Left lung (tissue), 14 donors: ENCODE measurements at regions of chr6 and their contacts with region 1.

Region 1: GRCh38 chr6:13194852-13195251 is 133.5 kb downstream of the TBC1D7 start:
- DNase-seq: peak; percentile 12 to 73 (median 62)
- ATAC-seq: peak; percentile 52
- H3K4me3 ChIP-seq: no peak overlapping the region
- H3K27ac ChIP-seq: no peak overlapping the region
- H3K4me1 ChIP-seq: no peaks in the 10 kb centered on the region
- H3K27me3 ChIP-seq: no peaks in the 10 kb centered on the region
- CTCF ChIP-seq: peak; percentile 28

Region 2: GRCh38 chr6:13328076-13328874 is 133.4 kb after region 1 on chr6 and contains the start of gene TBC1D7:
- intact Hi-C with region 1: loop called in 1 of 2 experiments (anchors 10 kb)
- DNase-seq: peak; percentile 91 to 98 (median 95)
- ATAC-seq: peak; percentile 96
- H3K4me3 ChIP-seq: peak within 1 kb of the TSS; percentile 78 to 85
- H3K27ac ChIP-seq: peak within 1 kb of the TSS; percentile 93 to 97
- H3K4me1 ChIP-seq: peaks cover 2 to 22% of the 10 kb centered on the region in 2 donors
- H3K27me3 ChIP-seq: no peaks in the 10 kb centered on the region
- CTCF ChIP-seq: no peak
- polyA plus RNA-seq, gene TBC1D7: 27.4 to 38.8 (median 34.9) TPM

Region 3: DNA sequence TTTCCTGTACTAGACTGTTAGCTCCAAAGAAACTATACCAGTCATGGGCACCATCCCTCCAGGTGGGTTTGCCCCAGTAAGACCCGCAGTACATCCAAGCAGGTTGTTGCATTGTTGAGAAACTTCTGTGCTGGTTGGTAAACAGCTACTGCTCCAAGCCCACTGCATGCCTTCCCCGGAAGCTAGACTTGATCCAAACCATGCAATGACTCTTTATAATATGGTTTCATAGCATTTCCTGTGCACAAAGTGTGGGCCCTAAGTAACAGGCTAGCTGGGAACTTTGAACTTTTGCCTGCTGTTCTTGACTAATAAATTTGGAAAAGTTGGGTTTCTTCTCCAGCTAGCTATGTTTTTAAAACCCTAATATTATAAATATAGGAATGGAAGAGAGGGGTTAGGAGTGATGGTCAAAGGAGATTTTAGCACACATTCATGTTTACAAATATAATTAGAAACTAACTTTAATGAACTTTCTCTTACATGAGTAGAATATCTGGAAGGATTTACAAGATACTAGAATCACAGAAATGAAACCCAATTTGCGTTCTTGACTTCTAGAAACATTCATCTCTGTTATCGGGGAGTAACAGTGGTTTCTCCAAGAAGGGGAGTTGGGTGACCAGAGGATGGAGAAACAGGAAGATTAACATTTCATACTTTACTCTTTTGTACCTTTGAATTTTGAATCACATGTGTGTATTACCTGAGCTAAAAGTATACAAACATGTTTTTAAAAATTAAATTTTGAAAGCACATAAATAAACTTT is 240.8 kb after region 1 on chr6:
- intact Hi-C with region 1: no loop called
- DNase-seq: no peak
- ATAC-seq: no peak
- H3K4me3 ChIP-seq: no peak overlapping the region
- H3K27ac ChIP-seq: no peak overlapping the region
- H3K4me1 ChIP-seq: peaks cover 2 to 62% of the 10 kb centered on the region in 2 donors
- H3K27me3 ChIP-seq: no peaks in the 10 kb centered on the region
- CTCF ChIP-seq: no peak